HepG2 (cell line): ENCODE measurements at regions of chr7 and their contacts with region 1.

Region 1: DNA sequence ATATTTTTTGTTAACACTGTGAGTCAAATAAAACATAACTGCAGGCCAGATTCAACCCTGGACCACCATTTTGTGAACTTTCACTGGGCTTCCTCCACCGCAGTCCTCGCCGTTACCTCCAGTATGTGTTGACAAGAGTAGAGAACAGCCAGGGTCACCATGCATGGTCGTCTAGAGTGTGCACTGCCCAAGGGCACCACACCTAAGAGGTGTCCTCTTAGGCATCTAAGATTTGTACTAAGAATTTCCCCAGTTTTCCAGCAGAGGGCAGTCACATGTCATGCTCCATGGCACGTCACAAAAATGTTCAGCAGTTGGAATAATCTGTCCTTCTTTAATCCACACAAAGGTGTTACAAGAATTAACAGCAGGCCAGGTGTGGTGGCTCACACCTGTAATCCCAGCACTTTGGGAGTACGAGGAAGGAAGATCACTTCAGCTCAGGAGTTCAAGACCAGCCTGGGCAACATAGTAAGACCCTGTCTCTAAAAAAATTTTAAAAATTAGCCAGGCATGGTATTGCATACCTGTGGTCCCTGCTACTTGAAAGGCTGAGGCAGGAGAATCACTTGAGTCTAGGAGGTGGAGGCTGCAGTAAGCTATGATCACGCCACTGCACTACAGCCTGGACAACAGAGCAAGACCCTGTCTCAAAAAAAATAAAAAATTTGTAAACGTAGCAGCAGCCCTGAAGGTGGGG is 71.2 kb upstream of the FOXK1 start:
- DNase-seq: peak; percentile 74
- ATAC-seq: peak; percentile 82
- H3K4me3 ChIP-seq: no peak overlapping the region
- H3K27ac ChIP-seq: no peak overlapping the region
- H3K4me1 ChIP-seq: peaks cover 18% of the 10 kb centered on the region
- H3K27me3 ChIP-seq: peaks cover 0 to 13% of the 10 kb centered on the region in 2 experiments; a peak in 3 of 5 replicates
- CTCF ChIP-seq: peak; percentile 84
- EP300 ChIP-seq: no peak
- POLR2A ChIP-seq: no peak
- RAD21 ChIP-seq: peak; percentile 72

Region 2: GRCh38 chr7:4631664-4632171 is 20.8 kb after region 1 on chr7:
- CTCF ChIA-PET with region 1: interaction called, 14 read pairs
- POLR2A ChIA-PET with region 1: no interaction called
- in situ Hi-C with region 1: no loop called
- intact Hi-C with region 1: loop called (anchors 1 kb)
- DNase-seq: peak; percentile 84
- ATAC-seq: peak; percentile 95
- H3K4me3 ChIP-seq: peak overlapping the region; percentile 14 to 53 (median 31); a peak in 3 of 6 replicates
- H3K27ac ChIP-seq: no peak overlapping the region
- H3K4me1 ChIP-seq: peaks cover 16% of the 10 kb centered on the region
- H3K27me3 ChIP-seq: no peaks in the 10 kb centered on the region
- CTCF ChIP-seq: peak; percentile 93
- EP300 ChIP-seq: no peak
- POLR2A ChIP-seq: no peak
- RAD21 ChIP-seq: peak; percentile 84

Region 3: GRCh38 chr7:4753711-4754432 is 143.0 kb after region 1 on chr7:
- CTCF ChIA-PET with region 1: interaction called, 25 read pairs
- POLR2A ChIA-PET with region 1: no interaction called
- in situ Hi-C with region 1: loop called (anchors 25 kb)
- intact Hi-C with region 1: loop called (anchors 1 kb)
- DNase-seq: peak; percentile 58
- ATAC-seq: peak; percentile 96
- H3K4me3 ChIP-seq: no peak overlapping the region
- H3K27ac ChIP-seq: no peak overlapping the region
- H3K4me1 ChIP-seq: peaks cover 9% of the 10 kb centered on the region; the same call in 1 of the 2 replicates
- H3K27me3 ChIP-seq: no peaks in the 10 kb centered on the region
- CTCF ChIP-seq: peak; percentile 96
- EP300 ChIP-seq: no peak
- POLR2A ChIP-seq: no peak
- RAD21 ChIP-seq: peak; percentile 91